Activated CD4-positive, alpha-beta T cell treated with anti-CD3 and anti-CD28 coated beads for 36 hours (primary cell): ENCODE measurements at regions of chr3 and their contacts with region 1.

Region 1: GRCh38 chr3:143951351-143951971 is 20.2 kb upstream of the DIPK2A start:
- DNase-seq: peak; percentile 51
- ATAC-seq: peak; percentile 47
- H3K4me3 Mint-ChIP-seq: no peak overlapping the region
- H3K27ac Mint-ChIP-seq: no peak overlapping the region
- H3K4me1 Mint-ChIP-seq: no peaks in the 10 kb centered on the region
- H3K27me3 Mint-ChIP-seq: peaks cover 3% of the 10 kb centered on the region

Region 2: DNA sequence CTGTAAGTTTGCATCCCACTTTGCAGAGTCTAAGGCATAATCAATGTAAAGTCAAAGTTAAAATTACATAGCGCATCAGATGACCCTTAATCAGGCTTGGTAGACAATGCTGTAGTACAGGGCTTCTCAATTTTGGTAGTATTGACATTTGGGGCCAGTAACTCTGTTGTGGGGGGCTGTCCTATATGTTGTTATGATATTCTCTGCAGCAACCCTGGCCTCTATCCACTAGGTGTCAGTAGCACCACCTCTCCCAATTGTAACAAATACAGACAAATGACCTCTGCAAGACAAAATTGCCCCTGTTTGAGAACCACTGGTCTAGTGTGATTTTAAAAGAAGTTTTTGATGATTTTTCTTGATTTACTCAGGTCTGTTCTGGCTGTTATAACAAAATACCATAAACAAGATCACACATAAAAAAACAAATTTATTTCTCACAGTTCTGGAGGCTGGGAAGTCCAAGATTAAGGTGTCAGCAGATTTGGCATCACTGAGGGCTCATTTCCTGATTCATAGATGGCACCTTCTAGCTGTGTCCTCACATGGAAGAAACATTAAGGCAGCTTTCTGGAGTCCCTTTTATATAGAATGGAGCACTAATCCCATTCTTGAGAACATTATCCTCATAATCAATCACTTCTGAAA is 65.6 kb before region 1 on chr3:
- CTCF ChIA-PET with region 1: interaction called, 15 read pairs
- POLR2A ChIA-PET with region 1: no interaction called
- intact Hi-C with region 1: loop called (anchors 1 to 5 kb)
- DNase-seq: peak; percentile 40
- ATAC-seq: peak; percentile 68
- H3K4me3 Mint-ChIP-seq: no peak overlapping the region
- H3K27ac Mint-ChIP-seq: no peak overlapping the region
- H3K4me1 Mint-ChIP-seq: no peaks in the 10 kb centered on the region
- H3K27me3 Mint-ChIP-seq: no peaks in the 10 kb centered on the region

Region 3: DNA sequence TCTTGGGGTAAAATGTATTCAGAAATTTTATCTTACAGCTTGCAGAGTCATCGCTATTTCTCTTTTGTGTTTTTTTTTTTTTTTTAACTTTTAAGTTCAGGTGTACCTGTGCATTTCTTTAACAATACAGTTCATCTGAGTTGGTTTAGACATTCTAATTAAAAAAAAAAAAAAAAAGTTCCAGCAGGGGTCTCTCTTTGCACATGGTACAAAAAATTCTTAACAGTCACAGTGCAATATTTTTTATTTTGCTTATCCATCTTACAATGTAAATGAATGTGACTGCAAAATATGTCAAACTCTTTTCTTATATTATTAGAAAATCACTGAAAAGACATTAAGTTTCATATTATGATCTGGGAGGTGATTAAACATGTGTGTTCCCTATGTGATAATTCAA is 55.7 kb before region 1 on chr3:
- CTCF ChIA-PET with region 1: interaction called, 3 read pairs
- POLR2A ChIA-PET with region 1: no interaction called
- intact Hi-C with region 1: loop called in 1 of 2 experiments (anchors 2 kb)
- DNase-seq: no peak
- ATAC-seq: no peak
- H3K4me3 Mint-ChIP-seq: no peak overlapping the region
- H3K27ac Mint-ChIP-seq: no peak overlapping the region
- H3K4me1 Mint-ChIP-seq: no peaks in the 10 kb centered on the region
- H3K27me3 Mint-ChIP-seq: peaks cover 5% of the 10 kb centered on the region

Region 4: GRCh38 chr3:144270100-144270499 is 318.6 kb after region 1 on chr3:
- CTCF ChIA-PET with region 1: no interaction called
- POLR2A ChIA-PET with region 1: no interaction called
- intact Hi-C with region 1: no loop called
- DNase-seq: no peak
- ATAC-seq: no peak
- H3K4me3 Mint-ChIP-seq: no peak overlapping the region
- H3K27ac Mint-ChIP-seq: no peak overlapping the region
- H3K4me1 Mint-ChIP-seq: peaks cover 2% of the 10 kb centered on the region
- H3K27me3 Mint-ChIP-seq: no peaks in the 10 kb centered on the region